Activated CD8-positive, alpha-beta memory T cell treated with anti-CD3 and anti-CD28 coated beads, Interleukin-2, amount 10 ng/mL, durations not matched to agents 7 days and 5 days (primary cell): ENCODE measurements at regions of chr12 and their contacts with region 1.

Region 1: GRCh38 chr12:69254046-69254445 is 14.7 kb downstream of the CPSF6 start:
- DNase-seq: no peak
- ATAC-seq: peak; percentile 80
- H3K4me3 Mint-ChIP-seq: no peak overlapping the region
- H3K27ac Mint-ChIP-seq: peak overlapping the region; percentile 76
- H3K4me1 Mint-ChIP-seq: peaks cover 42% of the 10 kb centered on the region
- H3K27me3 Mint-ChIP-seq: no peaks in the 10 kb centered on the region

Region 2: DNA sequence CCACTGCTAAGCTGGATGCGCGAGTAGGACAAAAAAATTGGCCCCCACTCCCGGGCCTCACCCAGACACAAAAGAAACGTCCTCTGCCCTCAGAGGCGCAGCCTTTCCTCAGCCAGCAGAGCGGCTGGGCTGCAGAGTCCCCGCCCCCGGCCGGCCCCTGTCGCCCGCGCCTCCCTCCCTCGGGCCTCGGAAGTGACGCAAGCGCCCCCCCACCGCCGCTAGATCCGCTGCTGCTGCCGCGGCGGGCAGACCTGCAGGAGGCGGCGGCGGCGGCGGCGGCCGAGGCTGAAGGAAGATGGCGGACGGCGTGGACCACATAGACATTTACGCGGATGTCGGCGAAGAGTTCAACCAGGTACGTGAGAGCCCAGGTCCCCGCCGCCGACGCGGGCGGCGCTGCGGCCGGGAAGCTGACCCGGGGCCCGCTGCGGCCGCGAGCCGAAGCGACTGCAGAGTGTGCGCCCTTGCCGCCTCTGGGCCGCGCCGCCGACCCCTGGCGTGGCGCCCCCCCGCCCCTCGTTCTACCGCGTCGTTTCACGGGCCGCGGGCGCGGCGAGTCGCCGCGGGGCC is 14.6 kb before region 1 on chr12 and contains the start of gene CPSF6:
- CTCF ChIA-PET with region 1: interaction called, 20 read pairs
- DNase-seq: peak; percentile 97
- ATAC-seq: peak; percentile 93
- H3K4me3 Mint-ChIP-seq: peak within 1 kb of the TSS; percentile 97
- H3K27ac Mint-ChIP-seq: peak within 1 kb of the TSS; percentile 99
- H3K4me1 Mint-ChIP-seq: peaks cover 49% of the 10 kb centered on the region
- H3K27me3 Mint-ChIP-seq: no peaks in the 10 kb centered on the region
- total RNA-seq, gene CPSF6: 103 to 113 TPM

Region 3: DNA sequence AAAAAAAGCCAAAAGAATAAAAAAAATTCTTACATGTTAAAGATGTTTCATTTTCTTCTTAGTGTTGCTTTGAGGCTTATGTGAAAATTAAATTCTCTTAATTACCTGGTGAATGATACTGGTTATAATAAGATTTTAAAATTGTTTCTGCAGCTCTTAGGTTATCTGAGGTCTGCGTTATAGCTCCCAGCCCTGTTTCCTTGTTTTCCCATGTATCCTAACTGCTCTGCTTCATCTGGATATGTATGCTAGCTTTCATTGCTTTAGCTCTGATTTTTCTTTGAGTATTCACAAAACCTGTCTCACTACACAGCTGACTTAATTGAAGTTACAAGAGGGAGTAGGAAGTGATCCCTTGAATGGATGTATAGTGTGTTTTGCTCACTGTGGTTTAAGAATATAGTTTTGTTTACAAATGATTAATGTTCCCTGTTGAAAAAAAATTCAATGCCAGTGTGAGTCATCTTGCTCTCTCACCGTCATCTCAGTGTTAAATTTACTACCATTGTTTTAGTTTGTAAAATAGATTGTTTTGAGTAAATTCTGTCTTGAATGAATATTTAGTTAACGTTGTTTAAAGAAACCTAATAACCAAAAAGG is 12.1 kb after region 1 on chr12:
- CTCF ChIA-PET with region 1: interaction called, 11 read pairs
- DNase-seq: no peak
- ATAC-seq: peak; percentile 16
- H3K4me3 Mint-ChIP-seq: no peak overlapping the region
- H3K27ac Mint-ChIP-seq: peak overlapping the region; percentile 63
- H3K4me1 Mint-ChIP-seq: peaks cover 3% of the 10 kb centered on the region
- H3K27me3 Mint-ChIP-seq: no peaks in the 10 kb centered on the region